ENCODE measurements at regions of chr11 and their contacts with region 1.

Region 1: DNA sequence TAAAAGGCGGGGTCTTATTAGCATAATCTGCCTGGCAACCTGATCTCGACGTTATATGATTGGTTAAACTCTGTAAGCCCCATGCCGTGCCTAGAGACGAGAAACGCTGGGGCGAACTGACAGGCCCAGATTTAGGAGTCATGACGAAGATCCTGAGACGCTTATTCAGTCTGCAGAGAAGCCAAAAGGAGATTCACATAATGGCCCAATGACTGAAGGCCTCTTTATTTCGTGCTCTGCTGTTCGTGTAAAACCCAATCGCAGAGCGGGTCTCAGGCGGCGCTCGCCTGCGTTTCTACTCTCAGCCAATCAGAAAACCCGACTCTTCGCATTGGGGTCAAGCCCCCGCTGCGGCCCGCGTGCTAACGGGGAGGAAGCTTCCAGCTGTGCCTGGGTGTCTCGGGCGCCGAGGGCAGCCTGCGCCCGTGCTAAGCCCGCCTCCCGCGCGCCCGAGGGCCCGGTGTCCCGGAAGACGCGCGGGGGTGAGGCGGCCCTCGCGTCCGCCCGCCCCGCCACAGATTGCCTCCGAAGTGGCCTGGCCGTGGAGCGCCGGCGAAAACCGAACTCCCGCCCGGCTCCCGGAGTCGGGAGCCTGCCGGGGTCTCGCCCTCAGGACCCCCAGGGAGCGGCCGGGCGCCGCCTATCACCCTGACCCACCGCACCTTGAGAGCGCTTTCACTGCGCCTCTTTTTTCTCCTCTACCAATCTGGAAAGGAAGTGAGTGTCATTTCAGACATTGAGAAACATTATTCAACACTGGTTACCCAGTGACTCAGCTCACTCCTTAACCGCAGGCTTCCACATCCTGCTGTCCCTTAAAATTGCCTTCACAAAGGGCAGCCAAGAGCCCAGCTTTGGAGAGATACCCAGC is 446 bp upstream of the PRDM10 start:
- DNase-seq: peak; percentile 96
- H3K4me3 ChIP-seq: peak overlapping the region; percentile 75
- CTCF ChIP-seq: no peak

Region 2: DNA sequence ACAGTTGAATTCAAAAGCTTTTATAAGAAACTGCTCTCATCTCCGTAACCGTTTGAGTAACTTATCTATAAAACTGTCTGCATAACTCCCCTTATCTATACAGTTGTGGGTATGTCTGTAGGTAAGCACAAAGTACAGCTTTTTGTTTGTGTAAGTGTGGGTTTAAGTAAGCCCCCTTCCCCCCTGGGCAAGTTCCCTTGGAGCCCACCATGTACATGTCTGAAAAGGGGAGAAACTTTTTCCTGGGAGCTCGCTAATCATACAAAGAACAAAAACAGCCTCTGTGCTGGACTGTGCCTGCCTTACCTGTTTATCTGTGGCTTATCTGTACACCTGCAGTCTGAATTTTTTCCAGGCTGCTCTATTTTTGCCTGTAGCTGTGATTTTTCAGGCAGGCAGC is 223.7 kb before region 1 on chr11:
- CTCF ChIA-PET with region 1: no interaction called
- POLR2A ChIA-PET with region 1: no interaction called
- DNase-seq: no peak
- H3K4me3 ChIP-seq: no peak overlapping the region
- CTCF ChIP-seq: no peak

Region 3: GRCh38 chr11:129828301-129828836 is 174.7 kb before region 1 on chr11:
- CTCF ChIA-PET with region 1: no interaction called
- POLR2A ChIA-PET with region 1: no interaction called
- DNase-seq: no peak
- H3K4me3 ChIP-seq: no peak overlapping the region
- CTCF ChIP-seq: no peak

Region 4: GRCh38 chr11:130069684-130070108 is 66.6 kb after region 1 on chr11 and contains the start of gene APLP2:
- CTCF ChIA-PET with region 1: interaction called, 3 read pairs
- POLR2A ChIA-PET with region 1: interaction called, 12 read pairs
- DNase-seq: peak; percentile 84
- H3K4me3 ChIP-seq: peak within 1 kb of the TSS; percentile 75
- CTCF ChIP-seq: no peak

Region 5: GRCh38 chr11:130103296-130103814 is 100.3 kb after region 1 on chr11:
- CTCF ChIA-PET with region 1: no interaction called
- POLR2A ChIA-PET with region 1: interaction called, 10 read pairs
- DNase-seq: peak; percentile 88
- H3K4me3 ChIP-seq: no peak overlapping the region
- CTCF ChIP-seq: no peak

Measured in AG04449 (cell line).